ENCODE measurements at regions of chr20 and their contacts with region 1.

Region 1: GRCh38 chr20:12984069-12984765 is 24.6 kb upstream of the SPTLC3 start:
- DNase-seq: no peak
- ATAC-seq: no peak
- H3K4me3 ChIP-seq: no peak overlapping the region
- H3K27ac ChIP-seq: no peak overlapping the region
- H3K4me1 ChIP-seq: no peaks in the 10 kb centered on the region
- H3K27me3 ChIP-seq: no peaks in the 10 kb centered on the region; a peak in 1 of 4 replicates
- CTCF ChIP-seq: no peak
- EP300 ChIP-seq: no peak
- POLR2A ChIP-seq: no peak
- RAD21 ChIP-seq: no peak

Region 2: GRCh38 chr20:12970372-12970821 is 13.8 kb before region 1 on chr20:
- CTCF ChIA-PET with region 1: no interaction called
- POLR2A ChIA-PET with region 1: no interaction called
- RAD21 ChIA-PET with region 1: no interaction called
- SMC1A ChIA-PET with region 1: no interaction called
- in situ Hi-C with region 1: no loop called
- intact Hi-C with region 1: no loop called
- DNase-seq: no peak
- ATAC-seq: peak; percentile 52; the same call in 1 of the 3 replicates
- H3K4me3 ChIP-seq: no peak overlapping the region
- H3K27ac ChIP-seq: no peak overlapping the region
- H3K4me1 ChIP-seq: no peaks in the 10 kb centered on the region
- H3K27me3 ChIP-seq: no peaks in the 10 kb centered on the region
- CTCF ChIP-seq: peak; percentile 28 to 56 (median 48); a peak in 5 of 6 replicates
- EP300 ChIP-seq: no peak
- POLR2A ChIP-seq: no peak
- RAD21 ChIP-seq: peak; percentile 69

Region 3: DNA sequence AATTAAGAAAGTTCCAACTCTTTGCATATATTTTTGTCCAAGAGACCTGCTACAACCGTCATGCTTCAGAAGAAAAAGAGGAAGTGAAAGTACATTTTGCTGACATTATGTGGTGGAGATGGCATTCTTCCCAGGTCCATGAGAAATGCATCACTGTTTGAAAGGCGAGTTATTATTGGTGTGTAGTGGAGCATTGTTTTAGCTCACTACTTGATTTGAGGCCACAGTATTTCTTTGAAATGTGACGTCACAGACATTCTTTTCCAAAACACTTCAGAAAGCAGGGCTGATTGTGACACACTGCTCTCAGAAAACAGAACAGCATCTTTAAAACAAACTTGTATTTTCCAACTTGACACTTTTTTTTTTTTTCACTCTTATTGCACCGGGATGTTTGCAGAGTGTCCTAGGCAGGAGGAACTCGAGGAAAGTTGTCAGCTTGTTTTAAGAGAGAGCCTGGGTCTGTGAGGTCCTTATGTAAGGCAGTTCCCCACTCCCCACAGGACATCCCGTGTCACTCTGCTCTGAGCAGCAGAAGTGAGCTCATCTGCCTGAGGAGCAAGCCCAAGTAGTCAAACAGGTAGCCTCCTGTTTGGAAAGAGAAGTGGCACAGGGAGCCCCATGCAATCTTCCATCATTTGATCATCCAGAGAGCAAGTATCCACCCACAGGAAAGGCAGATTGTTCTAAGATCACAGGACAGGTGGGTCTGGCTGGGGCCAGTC is 25.6 kb after region 1 on chr20:
- CTCF ChIA-PET with region 1: no interaction called
- POLR2A ChIA-PET with region 1: no interaction called
- RAD21 ChIA-PET with region 1: no interaction called
- SMC1A ChIA-PET with region 1: interaction called, 3 read pairs
- in situ Hi-C with region 1: no loop called
- intact Hi-C with region 1: loop called (anchors 1 kb)
- DNase-seq: peak; percentile 77
- ATAC-seq: peak; percentile 96
- H3K4me3 ChIP-seq: no peak overlapping the region
- H3K27ac ChIP-seq: no peak overlapping the region
- H3K4me1 ChIP-seq: peaks cover 16% of the 10 kb centered on the region
- H3K27me3 ChIP-seq: no peaks in the 10 kb centered on the region
- CTCF ChIP-seq: no peak
- EP300 ChIP-seq: peak; percentile 43 to 75; a peak in 2 of 4 replicates
- POLR2A ChIP-seq: no peak
- RAD21 ChIP-seq: no peak

Region 4: DNA sequence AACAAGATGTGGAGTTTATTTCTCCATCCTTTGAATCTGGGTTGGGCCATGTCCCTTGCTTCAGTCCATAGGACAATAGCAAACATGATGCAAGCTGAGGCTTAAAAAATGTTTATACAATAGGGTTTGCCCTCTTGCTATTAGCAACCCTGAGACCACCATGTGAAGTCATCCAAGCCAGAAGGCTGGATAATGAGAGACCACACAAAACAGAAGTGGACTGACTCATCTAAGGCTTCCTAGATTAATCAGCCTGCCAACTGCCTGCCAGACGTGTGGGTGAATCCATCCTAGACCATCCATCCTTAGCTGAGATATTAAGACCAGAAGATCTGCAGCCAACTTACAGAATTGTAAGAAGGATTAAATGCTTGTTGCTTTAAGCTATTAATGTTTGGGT is 198.8 kb after region 1 on chr20:
- CTCF ChIA-PET with region 1: no interaction called
- POLR2A ChIA-PET with region 1: no interaction called
- RAD21 ChIA-PET with region 1: no interaction called
- SMC1A ChIA-PET with region 1: no interaction called
- in situ Hi-C with region 1: no loop called
- intact Hi-C with region 1: no loop called
- DNase-seq: no peak
- ATAC-seq: peak; percentile 75
- H3K4me3 ChIP-seq: no peak overlapping the region
- H3K27ac ChIP-seq: no peak overlapping the region
- H3K4me1 ChIP-seq: no peaks in the 10 kb centered on the region
- H3K27me3 ChIP-seq: no peaks in the 10 kb centered on the region; a peak in 1 of 4 replicates
- CTCF ChIP-seq: no peak
- EP300 ChIP-seq: no peak
- POLR2A ChIP-seq: no peak
- RAD21 ChIP-seq: no peak